ENCODE measurements at regions of chr2 and their contacts with region 1.

Region 1: DNA sequence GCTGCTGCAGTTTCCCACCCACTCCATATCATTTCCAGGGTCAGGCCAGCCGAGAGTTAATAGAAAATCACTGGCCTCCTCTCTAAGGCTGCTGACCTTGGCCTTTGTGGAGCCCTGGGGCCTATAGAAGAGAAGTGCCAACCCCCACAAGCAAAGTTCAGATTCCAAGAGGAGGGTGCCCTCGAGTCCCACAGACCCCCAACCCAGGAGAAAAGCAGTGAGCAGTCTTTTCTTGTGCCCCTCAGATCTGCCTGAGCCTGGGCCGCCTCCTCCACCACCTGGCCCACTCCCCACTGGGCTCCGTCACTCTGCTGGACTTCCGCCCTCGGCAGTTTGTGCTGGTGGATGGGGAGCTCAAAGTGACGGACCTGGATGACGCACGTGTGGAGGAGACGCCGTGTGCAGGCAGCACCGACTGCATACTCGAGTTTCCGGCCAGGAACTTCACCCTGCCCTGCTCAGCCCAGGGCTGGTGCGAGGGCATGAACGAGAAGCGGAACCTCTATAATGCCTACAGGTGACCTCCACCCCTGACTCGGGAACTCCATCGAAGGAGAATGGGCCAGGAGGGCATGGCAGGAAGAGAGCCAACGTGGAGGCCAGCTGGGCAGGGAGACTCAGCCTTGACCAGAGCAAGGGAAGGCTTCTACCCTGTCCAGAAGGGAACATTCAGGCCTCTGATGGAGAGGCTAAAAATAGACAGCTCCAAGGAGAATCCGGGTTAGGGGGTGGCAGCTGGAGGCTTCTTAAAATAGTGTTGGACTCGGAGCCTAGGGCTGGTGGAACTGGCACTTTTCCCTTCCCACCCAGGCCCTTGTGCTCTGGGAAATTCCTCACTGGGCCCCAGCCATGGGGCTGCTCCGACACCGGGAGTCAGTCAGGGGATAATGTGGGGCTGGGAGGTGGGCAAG is 6.2 kb downstream of the PKDCC start:
- DNase-seq: peak; percentile 64
- ATAC-seq: peak; percentile 64 to 67

Region 2: DNA sequence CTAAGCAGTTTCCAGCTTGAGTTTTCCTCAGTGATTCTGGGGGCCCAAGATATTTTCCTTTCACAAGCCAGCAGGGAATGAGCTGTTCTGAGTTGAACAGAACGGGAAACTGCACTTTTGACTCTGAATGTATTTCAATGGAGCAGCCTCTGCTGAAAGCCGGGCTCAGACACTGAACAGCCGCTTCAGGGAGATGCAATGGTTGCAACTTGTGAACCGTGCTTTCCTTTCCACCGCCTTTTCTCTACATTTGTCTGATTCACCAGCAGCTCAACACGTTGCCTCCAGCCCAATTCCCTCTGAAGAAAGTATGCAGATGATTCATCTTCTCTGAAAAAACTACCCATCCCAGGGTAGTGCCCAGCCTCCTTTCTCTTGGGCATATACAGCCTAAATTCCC is 125.5 kb before region 1 on chr2:
- intact Hi-C with region 1: loop called in 1 of 2 experiments (anchors 5 kb)
- DNase-seq: no peak
- ATAC-seq: peak in 1 of 2 donors; percentile 29

Region 3: DNA sequence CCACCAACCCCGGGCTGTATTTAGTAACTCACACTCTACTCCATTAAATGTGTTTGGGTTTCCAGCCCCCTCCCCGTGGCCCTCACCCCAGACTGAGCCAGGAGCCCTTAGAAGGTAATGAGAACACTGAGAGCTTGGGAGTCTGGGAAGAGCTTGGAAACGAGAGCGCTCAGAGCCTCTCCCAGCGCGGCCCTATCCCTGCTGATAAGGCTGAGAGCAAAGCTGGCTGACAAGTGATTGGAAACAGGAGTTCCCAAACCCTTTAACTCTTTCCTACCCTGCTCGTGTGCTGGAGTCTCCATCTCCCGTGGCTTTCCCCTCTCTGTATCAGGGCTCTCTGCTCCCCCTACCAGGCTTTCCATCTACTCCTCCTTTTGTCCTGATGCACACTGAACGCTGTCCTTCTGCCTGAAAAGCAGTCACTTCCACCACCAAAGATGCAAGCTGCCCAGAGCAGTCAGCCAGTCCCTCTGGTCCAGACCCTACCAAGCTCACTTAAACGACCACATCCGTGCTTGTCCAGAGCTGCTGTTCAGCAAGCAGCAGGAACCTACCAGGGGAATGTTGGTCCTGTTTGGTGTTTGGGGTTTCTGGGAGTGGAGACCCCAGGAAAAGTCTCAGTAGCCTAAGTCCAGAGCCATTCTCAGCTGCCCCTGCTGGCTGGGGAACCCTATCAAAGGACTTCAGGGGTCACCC is 106.2 kb before region 1 on chr2:
- intact Hi-C with region 1: loop called in 1 of 2 experiments (anchors 5 kb)
- DNase-seq: peak; percentile 63
- ATAC-seq: peak; percentile 92 to 96